ENCODE measurements at regions of chr21 and their contacts with region 1.

Region 1: GRCh38 chr21:45130324-45130774 is 56.0 kb downstream of the ADARB1 start:
- DNase-seq: no peak
- H3K4me3 Mint-ChIP-seq: no peak overlapping the region
- H3K27ac Mint-ChIP-seq: no peak overlapping the region
- H3K4me1 Mint-ChIP-seq: peaks cover 13% of the 10 kb centered on the region
- H3K27me3 Mint-ChIP-seq: no peaks in the 10 kb centered on the region

Region 2: DNA sequence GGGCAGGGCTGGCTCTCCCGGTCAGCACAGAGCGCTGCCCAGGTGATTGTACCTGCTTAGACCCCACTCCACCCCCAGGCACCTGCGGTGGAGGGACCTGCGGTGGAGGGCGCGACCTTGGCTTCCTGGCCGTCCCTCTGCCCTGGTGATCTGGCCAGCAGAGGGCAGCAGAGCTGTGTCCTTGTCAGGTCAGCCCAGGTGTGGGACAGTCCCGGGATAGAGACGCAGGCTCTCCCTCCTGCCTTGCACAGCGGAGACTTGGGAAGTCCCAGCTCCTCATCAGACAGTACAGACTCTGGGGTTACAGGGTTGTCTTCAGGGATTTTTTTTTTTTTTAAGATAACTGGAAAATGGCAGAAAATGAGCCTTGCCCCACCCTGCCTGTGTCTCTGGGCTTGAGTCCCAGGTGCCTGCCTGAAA is 180.6 kb before region 1 on chr21:
- CTCF ChIA-PET with region 1: interaction called, 155 read pairs
- DNase-seq: peak; percentile 90
- H3K4me3 Mint-ChIP-seq: no peak overlapping the region
- H3K27ac Mint-ChIP-seq: peak overlapping the region; percentile 19
- H3K4me1 Mint-ChIP-seq: peaks cover 11% of the 10 kb centered on the region
- H3K27me3 Mint-ChIP-seq: no peaks in the 10 kb centered on the region

Region 3: GRCh38 chr21:44962403-44962966 is 167.9 kb before region 1 on chr21:
- CTCF ChIA-PET with region 1: interaction called, 29 read pairs
- DNase-seq: no peak
- H3K4me3 Mint-ChIP-seq: no peak overlapping the region
- H3K27ac Mint-ChIP-seq: no peak overlapping the region
- H3K4me1 Mint-ChIP-seq: peaks cover 27% of the 10 kb centered on the region
- H3K27me3 Mint-ChIP-seq: no peaks in the 10 kb centered on the region

Region 4: GRCh38 chr21:45055861-45056260 is 74.5 kb before region 1 on chr21:
- CTCF ChIA-PET with region 1: no interaction called
- DNase-seq: no peak
- H3K4me3 Mint-ChIP-seq: no peak overlapping the region
- H3K27ac Mint-ChIP-seq: no peak overlapping the region
- H3K4me1 Mint-ChIP-seq: no peaks in the 10 kb centered on the region
- H3K27me3 Mint-ChIP-seq: peaks cover 74% of the 10 kb centered on the region

Region 5: GRCh38 chr21:45074818-45075595 is 55.3 kb before region 1 on chr21:
- CTCF ChIA-PET with region 1: interaction called, 36 read pairs
- DNase-seq: peak; percentile 41
- H3K4me3 Mint-ChIP-seq: peak overlapping the region; percentile 86
- H3K27ac Mint-ChIP-seq: peak overlapping the region; percentile 76
- H3K4me1 Mint-ChIP-seq: peaks cover 49% of the 10 kb centered on the region
- H3K27me3 Mint-ChIP-seq: no peaks in the 10 kb centered on the region

Region 6: DNA sequence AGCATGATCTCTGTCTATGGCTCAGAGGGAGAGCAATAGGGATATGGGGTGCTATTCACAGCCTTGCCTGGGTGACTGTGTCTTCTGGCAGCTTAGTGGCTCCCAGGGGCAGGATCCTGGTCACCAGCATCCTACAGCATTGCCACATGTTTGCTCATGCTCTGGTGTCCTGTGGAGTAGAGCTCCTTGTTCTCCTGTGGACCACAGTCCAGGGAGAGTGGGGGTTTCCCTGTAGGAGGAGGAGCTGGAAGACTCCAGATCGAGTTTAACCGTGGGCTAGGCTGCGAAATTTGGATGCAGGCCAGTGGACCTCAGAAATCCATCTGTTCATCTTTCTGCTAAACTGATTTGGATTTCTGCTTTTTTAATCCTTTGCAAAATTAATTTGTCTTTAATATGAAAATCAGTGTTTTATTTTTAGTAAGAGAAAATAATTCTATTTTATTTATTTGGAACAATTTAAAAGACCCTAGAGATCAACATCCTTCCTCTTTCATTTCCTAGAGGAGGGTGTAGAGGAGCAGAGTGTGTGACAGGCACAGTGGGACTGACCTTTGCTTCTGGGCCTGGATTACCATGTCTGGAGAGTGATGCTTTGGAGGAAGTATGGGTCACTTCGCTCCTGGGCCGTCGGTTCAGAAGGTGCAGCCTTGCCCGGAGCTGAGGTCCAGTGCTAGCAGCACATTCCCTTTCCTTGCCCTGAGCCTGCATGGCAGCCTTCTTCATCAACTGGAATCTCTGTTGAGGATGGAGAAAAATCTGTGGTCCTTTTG is 38.6 kb before region 1 on chr21:
- CTCF ChIA-PET with region 1: interaction called, 14 read pairs
- DNase-seq: no peak
- H3K4me3 Mint-ChIP-seq: no peak overlapping the region
- H3K27ac Mint-ChIP-seq: no peak overlapping the region
- H3K4me1 Mint-ChIP-seq: peaks cover 49% of the 10 kb centered on the region
- H3K27me3 Mint-ChIP-seq: no peaks in the 10 kb centered on the region

Region 7: GRCh38 chr21:45098867-45099266 is 31.5 kb before region 1 on chr21:
- CTCF ChIA-PET with region 1: interaction called, 15 read pairs
- DNase-seq: no peak
- H3K4me3 Mint-ChIP-seq: no peak overlapping the region
- H3K27ac Mint-ChIP-seq: no peak overlapping the region
- H3K4me1 Mint-ChIP-seq: peaks cover 31% of the 10 kb centered on the region
- H3K27me3 Mint-ChIP-seq: no peaks in the 10 kb centered on the region

Region 8: GRCh38 chr21:45255381-45256020 is 125.2 kb after region 1 on chr21:
- CTCF ChIA-PET with region 1: no interaction called
- DNase-seq: peak; percentile 54
- H3K4me3 Mint-ChIP-seq: no peak overlapping the region
- H3K27ac Mint-ChIP-seq: no peak overlapping the region
- H3K4me1 Mint-ChIP-seq: peaks cover 28% of the 10 kb centered on the region
- H3K27me3 Mint-ChIP-seq: peaks cover 77% of the 10 kb centered on the region

Region 9: DNA sequence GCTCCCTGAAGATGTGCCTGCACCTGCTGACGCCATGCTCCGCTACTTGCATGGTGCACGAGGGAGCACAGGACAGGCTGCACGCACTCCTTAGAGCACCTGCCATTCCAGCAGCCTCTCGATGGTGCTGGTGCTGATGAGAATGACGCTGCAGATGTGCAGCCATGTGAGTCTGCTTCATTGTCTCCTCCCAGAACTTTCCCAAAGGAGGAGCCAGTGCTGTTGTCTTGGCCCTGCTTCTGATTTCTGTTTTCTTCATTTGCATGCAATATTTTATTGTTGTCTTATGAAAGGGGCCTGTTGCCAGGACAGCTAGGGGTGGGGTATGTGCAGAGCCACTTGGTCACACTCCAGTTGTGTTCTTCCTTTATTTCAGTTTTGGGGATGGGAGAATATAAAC is 583.3 kb after region 1 on chr21:
- CTCF ChIA-PET with region 1: no interaction called
- DNase-seq: no peak
- H3K4me3 Mint-ChIP-seq: no peak overlapping the region
- H3K27ac Mint-ChIP-seq: no peak overlapping the region
- H3K4me1 Mint-ChIP-seq: peaks cover 10% of the 10 kb centered on the region
- H3K27me3 Mint-ChIP-seq: no peaks in the 10 kb centered on the region